ENCODE measurements at regions of chr21 and their contacts with region 1.

Region 1: GRCh38 chr21:33199516-33200217 is 30.1 kb upstream of the IFNAR2 start:
- DNase-seq: peak; percentile 76
- CTCF ChIP-seq: peak; percentile 76

Region 2: GRCh38 chr21:32757804-32758203 is 441.9 kb before region 1 on chr21:
- in situ Hi-C with region 1: no loop called
- DNase-seq: no peak
- CTCF ChIP-seq: no peak

Region 3: GRCh38 chr21:33109574-33110339 is 89.9 kb before region 1 on chr21:
- in situ Hi-C with region 1: no loop called
- DNase-seq: no peak
- CTCF ChIP-seq: no peak

Region 4: GRCh38 chr21:33441489-33442477 is 242.1 kb after region 1 on chr21:
- in situ Hi-C with region 1: loop called (anchors 5 kb)
- DNase-seq: peak; percentile 62
- CTCF ChIP-seq: no peak